Lower leg skin (tissue), 4 donors: ENCODE measurements at regions of chr2 and their contacts with region 1.

Region 1: DNA sequence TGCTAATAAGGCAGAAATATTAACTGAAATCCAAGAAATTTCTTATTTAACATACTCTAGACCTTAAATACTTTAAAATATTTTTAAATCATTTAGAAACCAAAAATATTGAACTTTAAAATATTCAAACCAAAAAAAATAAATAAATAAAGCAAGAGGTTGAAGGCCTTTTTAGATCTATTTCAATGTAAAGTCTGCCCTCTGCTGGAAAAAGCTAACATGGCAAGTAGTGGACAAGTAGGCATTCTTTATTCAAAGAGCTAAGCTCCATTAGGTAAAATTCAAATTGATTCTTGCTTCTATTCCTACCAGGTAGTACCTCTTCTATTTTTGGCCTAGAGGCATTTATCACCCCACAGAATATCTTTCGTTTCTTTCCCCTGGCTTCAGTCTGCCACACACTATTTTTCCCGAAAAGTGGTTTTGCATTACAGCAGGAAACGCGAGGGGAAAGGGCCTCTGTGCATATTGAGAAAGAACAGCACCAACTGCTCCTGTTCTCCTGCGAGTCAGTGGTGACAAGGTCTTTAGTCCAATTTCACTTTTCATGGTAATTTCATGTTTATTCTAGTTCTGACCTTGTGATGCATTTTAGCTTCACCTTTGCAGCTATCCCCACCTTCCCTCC is 20.4 kb downstream of the IFIH1 start:
- DNase-seq: peak in 1 of 2 donors; percentile 82
- H3K4me3 ChIP-seq: no peak overlapping the region
- CTCF ChIP-seq: peak in 1 of 3 donors; percentile 43
- POLR2A ChIP-seq: no peak

Region 2: DNA sequence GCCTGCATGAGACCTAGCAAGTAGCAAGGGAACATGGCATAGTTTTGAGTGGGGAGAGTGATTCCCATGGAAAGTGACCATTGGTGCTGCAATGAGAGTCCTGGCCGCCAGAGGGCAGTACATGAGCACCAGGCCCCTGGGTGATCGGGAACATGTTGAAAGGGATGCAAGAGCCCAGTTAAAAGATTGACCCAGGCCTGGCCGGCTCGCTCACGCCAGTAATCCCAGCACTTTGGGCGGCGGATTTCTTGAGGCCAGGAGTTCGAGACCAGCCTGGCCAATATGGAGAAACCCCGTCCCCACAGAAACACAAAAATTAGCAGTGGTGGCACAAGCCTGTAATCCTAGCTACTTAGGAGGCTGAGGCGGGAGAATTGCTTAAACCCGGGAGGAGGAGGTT is 77.0 kb before region 1 on chr2:
- intact Hi-C with region 1: loop called (anchors 5 kb)
- DNase-seq: peak; percentile 53 to 91
- H3K4me3 ChIP-seq: no peak overlapping the region
- CTCF ChIP-seq: peak in 1 of 3 donors; percentile 56
- POLR2A ChIP-seq: no peak